Endothelial cell of umbilical vein (primary cell): ENCODE measurements at regions of chr17 and their contacts with region 1.

Region 1: GRCh38 chr17:81419328-81419885 is 24.1 kb downstream of the BAHCC1 start:
- DNase-seq: peak; percentile 64
- H3K4me3 ChIP-seq: peak overlapping the region in 1 of 3 experiments; percentile 4
- H3K27ac ChIP-seq: peak overlapping the region; percentile 25
- H3K4me1 ChIP-seq: peaks cover 27% of the 10 kb centered on the region
- H3K27me3 ChIP-seq: no peaks in the 10 kb centered on the region
- CTCF ChIP-seq: no peak
- POLR2A ChIP-seq: peak; percentile 61

Region 2: GRCh38 chr17:80927791-80928216 is 491.6 kb before region 1 on chr17:
- CTCF ChIA-PET with region 1: no interaction called
- POLR2A ChIA-PET with region 1: no interaction called
- dilution Hi-C with region 1: no loop called
- intact Hi-C with region 1: no loop called
- DNase-seq: peak; percentile 96
- H3K4me3 ChIP-seq: no peak overlapping the region
- H3K27ac ChIP-seq: peak overlapping the region; percentile 54
- H3K4me1 ChIP-seq: peaks cover 18% of the 10 kb centered on the region
- H3K27me3 ChIP-seq: no peaks in the 10 kb centered on the region
- CTCF ChIP-seq: peak; percentile 80 to 84
- POLR2A ChIP-seq: no peak

Region 3: DNA sequence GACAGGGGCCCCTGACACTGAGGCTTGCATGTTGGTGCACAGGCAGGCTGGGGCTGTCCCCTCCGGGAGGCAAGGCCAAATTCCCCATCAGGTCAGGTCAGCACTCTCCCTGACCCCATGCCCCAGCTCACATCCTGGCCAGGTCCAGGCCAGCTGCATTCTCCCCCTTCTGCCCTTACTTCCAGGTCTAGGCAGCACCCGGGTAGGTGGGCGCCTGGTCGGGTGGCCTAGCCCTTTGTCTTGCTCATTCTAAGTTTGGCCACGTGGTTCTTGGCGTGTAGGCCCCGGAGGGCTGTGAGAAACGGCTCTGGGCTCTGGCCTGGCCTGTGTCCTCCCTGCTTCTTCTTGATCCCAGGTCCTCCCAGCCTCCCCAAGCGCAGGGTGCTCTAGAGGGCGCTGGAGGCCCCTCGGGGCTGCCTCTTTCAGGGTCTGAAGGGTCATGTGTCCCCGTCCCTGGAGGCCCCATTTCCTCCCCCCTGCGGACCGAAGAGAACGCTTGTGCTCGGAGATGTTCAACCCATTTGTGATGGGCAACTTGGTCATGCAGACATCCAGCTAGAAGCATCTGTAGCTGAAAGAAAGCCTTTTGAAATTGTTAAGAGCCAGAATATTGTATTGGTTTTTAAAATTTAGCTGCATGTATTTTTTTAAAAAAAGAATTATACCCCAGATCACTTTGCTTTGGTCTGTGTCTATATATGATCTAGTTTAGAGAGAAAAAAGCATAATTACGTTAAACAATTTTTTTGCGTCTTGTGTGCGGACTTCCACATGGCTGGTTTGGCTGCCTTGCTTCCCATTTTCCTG is 17.5 kb before region 1 on chr17:
- CTCF ChIA-PET with region 1: interaction called, 3 read pairs
- POLR2A ChIA-PET with region 1: no interaction called
- dilution Hi-C with region 1: no loop called
- intact Hi-C with region 1: loop called (anchors 1 kb)
- DNase-seq: peak; percentile 41
- H3K4me3 ChIP-seq: no peak overlapping the region
- H3K27ac ChIP-seq: no peak overlapping the region
- H3K4me1 ChIP-seq: peaks cover 21% of the 10 kb centered on the region
- H3K27me3 ChIP-seq: no peaks in the 10 kb centered on the region
- CTCF ChIP-seq: peak; percentile 19 to 47
- POLR2A ChIP-seq: no peak

Region 4: DNA sequence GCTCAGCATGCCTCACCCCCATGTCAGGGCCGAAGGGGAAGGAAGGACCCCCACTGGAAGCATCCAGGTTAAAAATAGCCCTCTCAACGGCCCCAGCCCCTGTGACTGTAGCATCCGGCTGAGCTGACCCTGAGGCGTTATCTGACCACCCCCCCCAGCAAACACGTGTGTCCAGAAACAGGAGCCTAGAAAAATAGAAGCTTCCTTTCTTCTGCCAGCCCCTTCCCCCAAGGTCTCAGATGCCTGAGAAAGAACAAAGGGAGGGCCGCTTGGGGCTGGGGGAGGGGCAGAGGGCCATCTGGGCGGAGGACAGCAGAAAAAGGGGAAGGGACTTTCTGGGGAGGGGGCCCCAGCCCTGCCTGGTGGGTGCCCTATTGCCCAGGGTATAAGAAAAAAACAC is 37.4 kb after region 1 on chr17:
- CTCF ChIA-PET with region 1: no interaction called
- POLR2A ChIA-PET with region 1: no interaction called
- dilution Hi-C with region 1: no loop called
- intact Hi-C with region 1: loop called (anchors 5 kb)
- DNase-seq: peak; percentile 80
- H3K4me3 ChIP-seq: no peak overlapping the region
- H3K27ac ChIP-seq: peak overlapping the region; percentile 39
- H3K4me1 ChIP-seq: peaks cover 19% of the 10 kb centered on the region
- H3K27me3 ChIP-seq: no peaks in the 10 kb centered on the region
- CTCF ChIP-seq: no peak
- POLR2A ChIP-seq: no peak